PC-9 (cell line): ENCODE measurements at regions of chr10 and their contacts with region 1.

Region 1: DNA sequence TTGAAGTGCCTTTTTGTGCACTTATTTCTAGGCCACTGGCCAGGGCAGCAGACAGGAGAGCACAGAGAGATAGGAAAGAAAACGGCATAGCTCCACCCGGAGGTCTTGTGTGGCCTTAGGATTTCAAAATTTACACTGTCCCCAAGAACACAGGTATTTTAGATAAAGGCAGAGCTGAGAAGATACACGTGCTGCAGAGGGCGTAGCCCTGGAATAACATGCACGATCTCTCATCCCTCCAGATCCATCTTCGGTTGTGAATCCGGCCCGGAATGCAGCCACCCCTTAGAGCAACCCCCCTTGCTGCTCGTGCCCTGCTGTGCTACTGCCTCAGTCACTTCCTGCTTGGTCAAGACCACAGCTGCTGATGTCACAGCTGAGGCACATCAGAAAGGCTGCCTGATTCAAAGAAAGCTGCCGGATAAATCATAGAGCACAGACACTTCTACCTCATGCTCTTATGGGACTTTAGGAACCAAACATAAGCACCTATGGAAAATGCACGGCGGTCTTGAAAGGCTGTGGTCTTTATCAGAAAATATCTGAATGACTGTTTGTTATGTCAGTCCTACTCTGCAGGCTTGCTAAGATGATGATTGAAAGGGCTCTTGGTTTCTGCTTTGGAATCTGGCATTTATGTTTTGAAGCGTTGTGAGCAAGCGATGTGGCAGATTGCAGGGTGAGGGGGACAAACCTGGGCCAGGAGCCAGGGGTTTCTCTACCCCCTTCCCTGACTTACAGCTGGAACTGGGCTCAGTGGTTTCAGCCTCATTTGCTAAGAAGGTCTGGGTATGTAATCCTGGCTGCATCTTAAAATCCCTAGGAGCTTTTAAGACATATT is 152.0 kb downstream of the SVIL start:
- DNase-seq: no peak
- H3K4me3 ChIP-seq: no peak overlapping the region
- H3K27ac ChIP-seq: no peak overlapping the region
- H3K4me1 ChIP-seq: no peaks in the 10 kb centered on the region
- H3K27me3 ChIP-seq: no peaks in the 10 kb centered on the region
- CTCF ChIP-seq: no peak

Region 2: GRCh38 chr10:29420744-29421143 is 62.1 kb before region 1 on chr10:
- CTCF ChIA-PET with region 1: no interaction called
- POLR2A ChIA-PET with region 1: no interaction called
- intact Hi-C with region 1: no loop called
- DNase-seq: no peak
- H3K4me3 ChIP-seq: no peak overlapping the region
- H3K27ac ChIP-seq: no peak overlapping the region
- H3K4me1 ChIP-seq: no peaks in the 10 kb centered on the region
- H3K27me3 ChIP-seq: no peaks in the 10 kb centered on the region
- CTCF ChIP-seq: no peak

Region 3: GRCh38 chr10:29496341-29497162 is 13.7 kb after region 1 on chr10:
- CTCF ChIA-PET with region 1: interaction called, 20 read pairs
- POLR2A ChIA-PET with region 1: interaction called, 11 read pairs
- intact Hi-C with region 1: no loop called
- DNase-seq: peak in 1 of 2 experiments; percentile 64
- H3K4me3 ChIP-seq: no peak overlapping the region
- H3K27ac ChIP-seq: no peak overlapping the region
- H3K4me1 ChIP-seq: no peaks in the 10 kb centered on the region
- H3K27me3 ChIP-seq: no peaks in the 10 kb centered on the region
- CTCF ChIP-seq: peak; percentile 79